Caco-2 (cell line): ENCODE measurements at regions of chr2 and their contacts with region 1.

Region 1: GRCh38 chr2:31945572-31945935 is 65.3 kb downstream of the MEMO1 start:
- DNase-seq: peak in 1 of 2 experiments; percentile 23
- H3K4me3 ChIP-seq: no peak overlapping the region
- H3K4me3 Mint-ChIP-seq: no peak overlapping the region
- H3K27ac Mint-ChIP-seq: peak overlapping the region; percentile 66
- H3K4me1 ChIP-seq: peaks cover 53% of the 10 kb centered on the region
- H3K4me1 Mint-ChIP-seq: peaks cover 47% of the 10 kb centered on the region
- H3K27me3 ChIP-seq: no peaks in the 10 kb centered on the region
- H3K27me3 Mint-ChIP-seq: no peaks in the 10 kb centered on the region
- CTCF ChIP-seq: no peak

Region 2: GRCh38 chr2:31893094-31893493 is 52.5 kb before region 1 on chr2:
- CTCF ChIA-PET with region 1: no interaction called
- POLR2A ChIA-PET with region 1: no interaction called
- intact Hi-C with region 1: no loop called
- DNase-seq: no peak
- H3K4me3 ChIP-seq: no peak overlapping the region
- H3K4me3 Mint-ChIP-seq: no peak overlapping the region
- H3K27ac Mint-ChIP-seq: no peak overlapping the region
- H3K4me1 ChIP-seq: no peaks in the 10 kb centered on the region
- H3K4me1 Mint-ChIP-seq: no peaks in the 10 kb centered on the region
- H3K27me3 ChIP-seq: no peaks in the 10 kb centered on the region
- H3K27me3 Mint-ChIP-seq: no peaks in the 10 kb centered on the region
- CTCF ChIP-seq: no peak

Region 3: DNA sequence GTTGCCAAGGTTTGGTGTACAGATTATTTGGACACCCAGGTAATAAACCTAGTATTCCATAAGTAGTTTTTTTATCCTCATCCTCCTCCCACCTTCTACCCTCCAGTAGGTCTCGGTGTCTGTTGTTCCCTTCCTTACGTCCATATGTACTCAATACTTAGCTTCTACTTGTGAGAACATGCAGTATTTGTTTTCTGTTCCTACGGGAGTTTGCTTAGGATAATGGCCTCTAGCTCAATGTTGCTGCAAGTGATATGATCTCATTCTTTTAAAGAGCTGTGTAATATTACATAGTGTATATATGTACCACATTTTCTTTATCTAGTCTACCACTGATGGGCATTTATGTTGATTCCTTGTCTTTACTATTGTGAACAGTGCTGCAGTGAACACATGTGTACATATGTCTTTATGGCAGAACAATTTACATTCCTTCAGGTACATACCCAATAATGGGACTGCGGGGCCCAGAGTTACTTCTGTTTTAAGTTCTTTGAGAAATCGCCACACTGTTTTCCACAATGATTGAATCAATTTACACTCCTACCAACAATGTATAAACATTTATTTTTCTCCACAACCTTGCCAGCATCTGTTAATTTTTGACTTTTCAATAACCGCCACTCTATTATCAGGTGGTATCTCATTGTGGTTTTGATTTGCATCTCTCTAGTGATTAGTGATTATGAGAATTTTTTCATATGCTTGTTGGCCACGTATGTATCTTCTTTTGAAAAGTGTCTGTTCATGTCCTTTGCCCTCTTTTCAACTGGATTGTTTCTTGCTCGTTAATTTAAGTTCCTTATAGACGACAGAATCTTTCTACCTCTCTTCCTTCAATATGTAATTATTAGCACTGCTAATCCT is 22.8 kb before region 1 on chr2:
- CTCF ChIA-PET with region 1: no interaction called
- POLR2A ChIA-PET with region 1: no interaction called
- intact Hi-C with region 1: loop called (anchors 1 kb)
- DNase-seq: no peak
- H3K4me3 ChIP-seq: no peak overlapping the region
- H3K4me3 Mint-ChIP-seq: no peak overlapping the region
- H3K27ac Mint-ChIP-seq: peak overlapping the region; percentile 39
- H3K4me1 ChIP-seq: peaks cover 30% of the 10 kb centered on the region
- H3K4me1 Mint-ChIP-seq: peaks cover 21% of the 10 kb centered on the region
- H3K27me3 ChIP-seq: no peaks in the 10 kb centered on the region
- H3K27me3 Mint-ChIP-seq: no peaks in the 10 kb centered on the region
- CTCF ChIP-seq: no peak

Region 4: GRCh38 chr2:31980674-31981356 is 35.3 kb after region 1 on chr2:
- CTCF ChIA-PET with region 1: no interaction called
- POLR2A ChIA-PET with region 1: no interaction called
- intact Hi-C with region 1: loop called (anchors 5 kb)
- DNase-seq: peak in 1 of 2 experiments; percentile 24
- H3K4me3 ChIP-seq: no peak overlapping the region
- H3K4me3 Mint-ChIP-seq: no peak overlapping the region
- H3K27ac Mint-ChIP-seq: no peak overlapping the region
- H3K4me1 ChIP-seq: peaks cover 13% of the 10 kb centered on the region; the same call in 1 of the 2 replicates
- H3K4me1 Mint-ChIP-seq: peaks cover 15% of the 10 kb centered on the region
- H3K27me3 ChIP-seq: no peaks in the 10 kb centered on the region
- H3K27me3 Mint-ChIP-seq: no peaks in the 10 kb centered on the region
- CTCF ChIP-seq: no peak

Region 5: DNA sequence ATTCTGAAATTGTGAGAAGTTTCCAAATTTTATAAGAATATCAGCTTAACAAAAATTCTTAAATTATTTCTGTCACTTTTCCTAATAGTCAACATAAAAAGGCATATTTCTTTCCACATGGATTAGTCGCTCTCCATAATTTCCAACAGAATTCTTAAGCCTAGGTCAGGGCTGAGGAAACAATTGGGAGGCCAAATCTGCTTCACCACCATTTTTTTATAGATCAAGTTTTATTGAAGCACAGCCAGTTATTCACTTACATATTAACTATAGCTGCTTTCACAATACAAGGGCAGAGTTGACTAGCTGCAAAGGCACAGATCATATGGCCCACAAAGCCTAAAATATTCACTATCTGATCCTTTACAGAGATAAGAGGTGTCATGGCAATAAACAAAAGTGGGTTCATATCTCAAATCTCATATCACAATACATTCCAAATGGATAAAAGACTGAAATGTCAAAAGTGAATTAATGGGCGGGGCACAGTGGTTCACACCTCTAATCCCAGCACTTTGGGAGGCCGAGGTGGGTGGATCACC is 46.5 kb after region 1 on chr2:
- CTCF ChIA-PET with region 1: no interaction called
- POLR2A ChIA-PET with region 1: no interaction called
- intact Hi-C with region 1: loop called (anchors 2 kb)
- DNase-seq: peak; percentile 57 to 63
- H3K4me3 ChIP-seq: no peak overlapping the region
- H3K4me3 Mint-ChIP-seq: no peak overlapping the region
- H3K27ac Mint-ChIP-seq: peak overlapping the region; percentile 83
- H3K4me1 ChIP-seq: peaks cover 18% of the 10 kb centered on the region
- H3K4me1 Mint-ChIP-seq: peaks cover 26% of the 10 kb centered on the region
- H3K27me3 ChIP-seq: no peaks in the 10 kb centered on the region
- H3K27me3 Mint-ChIP-seq: no peaks in the 10 kb centered on the region
- CTCF ChIP-seq: no peak

Region 6: DNA sequence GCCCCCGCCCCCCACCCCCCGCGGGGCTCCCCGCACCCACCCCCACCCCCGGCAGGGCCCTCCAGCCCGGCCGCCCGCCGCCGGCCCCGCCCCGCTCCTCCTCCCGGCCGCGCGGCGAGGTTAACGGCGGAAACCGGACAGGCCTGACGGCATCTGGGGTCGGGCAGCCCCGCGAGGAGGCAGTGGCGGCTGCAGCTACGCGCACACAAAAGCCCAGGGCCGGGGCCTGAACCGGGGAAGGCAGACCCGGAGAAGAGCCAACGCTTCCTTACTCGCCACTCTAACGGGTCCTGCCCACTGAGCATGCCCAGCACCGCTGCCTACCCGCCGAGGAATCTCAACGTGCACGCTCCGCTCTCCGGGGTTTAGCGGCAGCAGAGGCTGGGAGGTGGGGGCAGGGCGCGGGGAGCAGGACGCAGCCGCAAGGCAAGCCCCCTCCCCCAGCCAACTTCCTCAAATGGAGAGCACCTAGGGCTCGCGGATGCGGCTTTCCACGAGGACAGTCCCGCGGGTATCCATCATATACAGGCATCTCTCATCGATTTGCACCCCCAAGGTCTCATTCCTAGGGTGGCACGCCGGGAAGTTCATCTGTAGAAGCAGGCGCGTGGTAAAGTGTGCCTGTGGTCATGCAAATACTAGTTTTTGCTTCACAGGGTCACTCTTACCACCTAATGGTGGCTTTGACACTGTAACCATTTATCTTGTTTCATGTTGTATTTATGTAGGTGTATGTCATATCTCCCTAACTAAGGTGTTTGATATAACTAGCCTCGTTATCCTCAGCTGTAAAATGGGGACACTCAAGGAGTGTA is 65.3 kb after region 1 on chr2 and contains the start of gene MEMO1:
- CTCF ChIA-PET with region 1: no interaction called
- POLR2A ChIA-PET with region 1: no interaction called
- intact Hi-C with region 1: loop called (anchors 1 kb)
- DNase-seq: peak; percentile 95 to 96
- H3K4me3 ChIP-seq: peak within 1 kb of the TSS; percentile 95
- H3K4me3 Mint-ChIP-seq: peak within 1 kb of the TSS; percentile 91
- H3K27ac Mint-ChIP-seq: peak within 1 kb of the TSS; percentile 86
- H3K4me1 ChIP-seq: peaks cover 31% of the 10 kb centered on the region
- H3K4me1 Mint-ChIP-seq: peaks cover 23% of the 10 kb centered on the region
- H3K27me3 ChIP-seq: no peaks in the 10 kb centered on the region
- H3K27me3 Mint-ChIP-seq: no peaks in the 10 kb centered on the region
- CTCF ChIP-seq: no peak
- total RNA-seq, gene MEMO1: 75.9 and 79.0 TPM in 2 replicates

Region 7: DNA sequence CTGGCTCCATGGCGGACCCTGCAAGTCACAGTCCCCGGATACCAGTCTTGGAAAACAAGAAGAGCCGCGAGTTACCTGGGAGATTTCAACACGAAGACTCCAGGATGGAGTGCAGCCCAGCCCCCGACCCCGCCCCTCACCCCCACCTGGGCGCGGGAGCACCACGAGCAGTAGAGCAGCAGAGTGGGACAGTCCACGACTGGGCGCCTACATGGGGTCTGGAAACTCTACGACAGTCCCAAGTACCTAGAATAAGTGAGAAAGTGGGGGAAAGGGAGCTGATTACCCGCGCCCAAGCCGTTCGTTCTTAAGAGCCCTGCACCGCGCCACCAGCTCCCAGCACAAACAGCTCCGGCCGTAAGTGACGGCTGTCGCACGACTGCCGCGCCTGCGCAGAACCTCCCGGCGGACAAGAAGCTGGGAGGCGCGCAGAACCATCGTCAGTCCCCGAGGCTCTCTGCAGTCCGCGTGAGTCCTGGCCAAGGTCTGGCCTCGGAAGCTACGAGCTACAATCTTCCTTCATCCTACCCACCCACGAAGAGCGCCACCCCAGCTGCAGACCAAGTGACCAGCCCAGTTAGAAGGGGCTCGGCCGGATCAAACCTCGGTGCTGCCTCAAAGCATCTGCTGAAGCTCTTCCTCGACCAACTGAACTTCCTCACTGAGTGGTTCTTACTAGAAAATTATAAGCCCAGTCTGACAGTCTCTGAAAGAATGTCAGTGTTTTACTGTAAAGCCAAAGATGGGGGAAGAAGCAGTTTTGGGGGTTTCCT is 94.1 kb after region 1 on chr2 and contains the start of gene DPY30:
- CTCF ChIA-PET with region 1: no interaction called
- POLR2A ChIA-PET with region 1: interaction called, 14 read pairs
- intact Hi-C with region 1: no loop called
- DNase-seq: peak; percentile 95
- H3K4me3 ChIP-seq: peak within 1 kb of the TSS; percentile 91
- H3K4me3 Mint-ChIP-seq: peak within 1 kb of the TSS; percentile 100
- H3K27ac Mint-ChIP-seq: peak within 1 kb of the TSS; percentile 95
- H3K4me1 ChIP-seq: peaks cover 9% of the 10 kb centered on the region; the same call in 1 of the 2 replicates
- H3K4me1 Mint-ChIP-seq: no peaks in the 10 kb centered on the region
- H3K27me3 ChIP-seq: no peaks in the 10 kb centered on the region
- H3K27me3 Mint-ChIP-seq: no peaks in the 10 kb centered on the region
- CTCF ChIP-seq: peak in 1 of 2 experiments; percentile 15
- total RNA-seq, gene DPY30: 125 and 136 TPM in 2 replicates

Region 8: DNA sequence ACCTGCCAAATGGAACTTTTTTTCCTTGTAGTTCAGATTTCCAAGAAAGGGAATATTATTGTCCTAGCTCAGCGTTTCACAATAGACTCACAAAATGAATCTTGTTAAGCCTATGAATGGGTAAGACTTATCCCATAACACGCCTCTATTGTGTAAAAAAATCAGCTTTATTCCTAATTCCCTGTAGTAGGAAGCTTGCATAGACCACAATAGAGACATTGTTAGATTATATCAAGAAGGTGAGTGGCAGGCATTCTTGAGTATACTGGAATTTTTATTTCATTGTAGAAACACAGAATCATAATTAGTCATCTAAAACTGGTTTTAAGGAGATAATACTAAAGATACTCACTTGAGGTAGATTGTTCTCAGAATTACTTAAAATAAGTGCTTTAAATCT is 173.6 kb after region 1 on chr2:
- CTCF ChIA-PET with region 1: no interaction called
- POLR2A ChIA-PET with region 1: no interaction called
- intact Hi-C with region 1: no loop called
- DNase-seq: no peak
- H3K4me3 ChIP-seq: no peak overlapping the region
- H3K4me3 Mint-ChIP-seq: no peak overlapping the region
- H3K27ac Mint-ChIP-seq: no peak overlapping the region
- H3K4me1 ChIP-seq: no peaks in the 10 kb centered on the region
- H3K4me1 Mint-ChIP-seq: no peaks in the 10 kb centered on the region
- H3K27me3 ChIP-seq: no peaks in the 10 kb centered on the region
- H3K27me3 Mint-ChIP-seq: no peaks in the 10 kb centered on the region
- CTCF ChIP-seq: no peak